Activated naive CD4-positive, alpha-beta T cell treated with anti-CD3 and anti-CD28 coated beads for 36 hours (primary cell): ENCODE measurements at regions of chr19 and their contacts with region 1.

Region 1: DNA sequence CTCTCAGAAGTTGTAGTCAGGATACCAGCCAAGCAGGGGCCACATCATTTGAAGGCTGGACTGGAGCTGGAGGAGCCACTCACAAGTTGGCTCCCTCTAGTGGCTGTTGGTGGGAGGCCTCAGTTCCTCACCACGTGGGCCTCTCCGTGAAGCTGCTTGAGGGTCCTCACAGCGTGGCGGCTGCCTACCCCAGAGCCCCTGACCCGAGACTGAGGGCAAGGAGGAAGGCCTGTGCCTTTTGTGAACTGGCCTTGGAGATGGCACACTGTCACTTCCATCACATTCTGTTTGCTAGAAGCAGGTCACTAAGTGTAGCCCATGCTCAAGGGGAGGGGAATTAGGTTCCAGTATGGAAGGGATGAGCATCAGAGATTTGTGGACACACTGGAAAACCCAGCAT is 14.6 kb downstream of the GNA11 start:
- DNase-seq: peak; percentile 77
- H3K4me3 Mint-ChIP-seq: no peak overlapping the region
- H3K27ac Mint-ChIP-seq: no peak overlapping the region
- H3K4me1 Mint-ChIP-seq: peaks cover 9% of the 10 kb centered on the region
- H3K27me3 Mint-ChIP-seq: no peaks in the 10 kb centered on the region

Region 2: GRCh38 chr19:2648528-2648937 is 460.2 kb before region 1 on chr19:
- CTCF ChIA-PET with region 1: no interaction called
- intact Hi-C with region 1: loop called (anchors 1 kb)
- DNase-seq: peak; percentile 84
- H3K4me3 Mint-ChIP-seq: no peak overlapping the region
- H3K27ac Mint-ChIP-seq: no peak overlapping the region
- H3K4me1 Mint-ChIP-seq: no peaks in the 10 kb centered on the region
- H3K27me3 Mint-ChIP-seq: no peaks in the 10 kb centered on the region

Region 3: GRCh38 chr19:2962045-2962561 is 146.7 kb before region 1 on chr19:
- CTCF ChIA-PET with region 1: interaction called, 50 read pairs
- intact Hi-C with region 1: loop called (anchors 1 kb)
- DNase-seq: peak; percentile 58
- H3K4me3 Mint-ChIP-seq: peak overlapping the region; percentile 22
- H3K27ac Mint-ChIP-seq: no peak overlapping the region
- H3K4me1 Mint-ChIP-seq: peaks cover 3% of the 10 kb centered on the region
- H3K27me3 Mint-ChIP-seq: no peaks in the 10 kb centered on the region

Region 4: DNA sequence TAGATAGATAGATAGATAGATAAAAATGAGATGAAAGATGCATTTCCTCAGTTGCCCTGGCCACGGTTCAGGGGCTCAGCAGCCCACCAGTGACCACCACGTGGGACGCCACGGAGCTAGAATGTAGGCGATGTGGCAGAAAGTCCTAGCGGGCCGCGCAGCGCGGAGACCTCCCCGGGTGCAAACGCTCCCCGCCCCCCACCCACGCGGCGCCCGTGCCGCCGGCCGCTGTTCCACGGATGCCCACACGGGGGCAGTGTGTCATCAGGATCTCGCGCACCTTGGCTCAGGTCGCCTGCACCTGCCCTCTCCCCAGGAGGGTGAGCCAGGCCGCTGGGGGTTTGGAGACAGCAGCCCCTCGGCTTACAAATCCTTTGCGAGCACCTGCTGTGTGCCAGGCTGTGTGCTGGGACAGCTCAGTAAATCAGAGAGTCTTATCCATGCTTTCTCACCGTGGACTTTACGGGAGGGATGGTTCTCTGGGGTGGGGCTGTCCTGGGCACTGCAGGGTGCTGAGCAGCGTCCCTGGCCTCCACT is 32.8 kb before region 1 on chr19:
- CTCF ChIA-PET with region 1: interaction called, 64 read pairs
- intact Hi-C with region 1: loop called (anchors 1 kb)
- DNase-seq: peak; percentile 80
- H3K4me3 Mint-ChIP-seq: peak overlapping the region; percentile 38
- H3K27ac Mint-ChIP-seq: no peak overlapping the region
- H3K4me1 Mint-ChIP-seq: no peaks in the 10 kb centered on the region
- H3K27me3 Mint-ChIP-seq: no peaks in the 10 kb centered on the region

Region 5: GRCh38 chr19:3094601-3095437 is 14.0 kb before region 1 on chr19:
- CTCF ChIA-PET with region 1: interaction called, 15 read pairs
- intact Hi-C with region 1: no loop called
- DNase-seq: peak; percentile 59
- H3K4me3 Mint-ChIP-seq: peak overlapping the region; percentile 77
- H3K27ac Mint-ChIP-seq: no peak overlapping the region
- H3K4me1 Mint-ChIP-seq: peaks cover 34% of the 10 kb centered on the region
- H3K27me3 Mint-ChIP-seq: no peaks in the 10 kb centered on the region